CD8-positive, alpha-beta T cell (primary cell): ENCODE measurements at regions of chr17 and their contacts with region 1.

Region 1: GRCh38 chr17:49556223-49556971 is 19.3 kb upstream of the NXPH3 start:
- DNase-seq: peak; percentile 68 to 89 (median 81)
- ATAC-seq: peak; percentile 99
- H3K4me3 ChIP-seq: no peak overlapping the region
- H3K4me3 Mint-ChIP-seq: no peak overlapping the region
- H3K27ac ChIP-seq: no peak overlapping the region
- H3K27ac Mint-ChIP-seq: no peak overlapping the region
- H3K4me1 ChIP-seq: peaks cover 7% of the 10 kb centered on the region
- H3K4me1 Mint-ChIP-seq: peaks cover 5% of the 10 kb centered on the region
- H3K27me3 ChIP-seq: no peaks in the 10 kb centered on the region
- H3K27me3 Mint-ChIP-seq: peaks cover 3% of the 10 kb centered on the region
- CTCF ChIP-seq: peak; percentile 92

Region 2: GRCh38 chr17:49407981-49408501 is 148.4 kb before region 1 on chr17:
- CTCF ChIA-PET with region 1: interaction called, 131 read pairs
- POLR2A ChIA-PET with region 1: interaction called, 3 read pairs
- intact Hi-C with region 1: loop called (anchors 1 kb)
- DNase-seq: peak; percentile 76 to 90 (median 85)
- ATAC-seq: peak; percentile 97
- H3K4me3 ChIP-seq: no peak overlapping the region
- H3K4me3 Mint-ChIP-seq: no peak overlapping the region
- H3K27ac ChIP-seq: peak overlapping the region in 1 of 2 experiments; percentile 1
- H3K27ac Mint-ChIP-seq: peak overlapping the region; percentile 17
- H3K4me1 ChIP-seq: peaks cover 27% of the 10 kb centered on the region
- H3K4me1 Mint-ChIP-seq: peaks cover 36% of the 10 kb centered on the region
- H3K27me3 ChIP-seq: no peaks in the 10 kb centered on the region
- H3K27me3 Mint-ChIP-seq: no peaks in the 10 kb centered on the region
- CTCF ChIP-seq: peak; percentile 94

Region 3: DNA sequence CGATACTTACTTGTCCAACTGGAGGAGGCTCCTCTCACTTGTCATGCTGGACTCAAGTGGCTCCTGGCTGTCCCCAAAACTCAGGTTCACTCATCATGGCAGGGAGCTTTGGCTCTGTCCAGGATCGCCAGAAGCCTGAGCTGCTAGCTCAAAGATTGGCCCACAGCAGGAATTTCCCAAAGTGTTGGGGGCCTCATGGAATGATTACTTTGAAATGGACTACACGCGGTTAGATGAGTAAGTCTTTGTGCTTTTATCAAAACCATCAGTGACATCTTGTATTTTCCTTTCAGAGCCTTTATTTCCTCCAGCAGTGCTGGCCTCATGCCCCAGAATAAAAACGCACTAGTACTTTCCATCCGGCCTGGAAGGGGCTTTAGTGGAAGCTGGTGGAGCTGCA is 112.5 kb before region 1 on chr17:
- CTCF ChIA-PET with region 1: interaction called, 12 read pairs
- POLR2A ChIA-PET with region 1: no interaction called
- intact Hi-C with region 1: no loop called
- DNase-seq: no peak
- ATAC-seq: no peak
- H3K4me3 ChIP-seq: no peak overlapping the region
- H3K4me3 Mint-ChIP-seq: no peak overlapping the region
- H3K27ac ChIP-seq: no peak overlapping the region
- H3K27ac Mint-ChIP-seq: no peak overlapping the region
- H3K4me1 ChIP-seq: no peaks in the 10 kb centered on the region
- H3K4me1 Mint-ChIP-seq: peaks cover 2% of the 10 kb centered on the region
- H3K27me3 ChIP-seq: peaks cover 0 to 4% of the 10 kb centered on the region in 2 experiments
- H3K27me3 Mint-ChIP-seq: peaks cover 39% of the 10 kb centered on the region
- CTCF ChIP-seq: no peak

Region 4: DNA sequence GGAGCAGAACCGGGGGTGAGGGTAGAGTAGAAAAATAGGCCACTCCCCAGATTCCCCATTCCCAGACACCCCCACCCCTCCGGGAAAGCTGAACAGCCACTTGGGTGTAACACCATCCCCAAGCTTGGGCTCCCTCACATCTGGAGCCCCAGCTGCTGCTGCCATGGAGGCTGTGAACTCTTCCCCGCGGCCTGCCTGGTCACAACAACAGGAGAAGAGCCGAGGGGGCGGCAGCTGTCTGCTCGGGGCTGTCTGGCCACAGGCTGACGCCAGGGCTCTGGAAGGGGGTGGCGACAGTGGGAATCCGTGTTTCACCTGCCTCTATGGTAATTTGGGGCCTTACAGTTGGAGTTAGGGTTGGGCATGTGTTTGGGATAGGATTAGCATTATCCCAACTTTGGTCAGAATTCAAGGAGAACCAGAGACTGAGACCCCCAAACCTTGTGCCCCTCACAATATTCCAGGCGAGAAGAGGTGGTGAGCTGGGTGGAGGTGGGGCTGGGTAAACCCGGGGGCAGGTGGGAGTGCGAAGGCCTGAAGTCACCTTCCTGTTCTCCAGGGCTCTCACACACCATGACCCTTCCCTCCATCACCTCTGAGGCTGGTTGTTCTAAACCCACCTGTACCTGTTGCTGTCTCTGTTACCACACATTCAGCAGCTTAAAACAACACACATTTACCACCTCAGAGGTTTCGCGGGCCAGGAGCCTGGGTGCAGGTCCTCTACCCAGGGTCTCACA is 10.4 kb before region 1 on chr17:
- CTCF ChIA-PET with region 1: interaction called, 38 read pairs
- POLR2A ChIA-PET with region 1: no interaction called
- intact Hi-C with region 1: no loop called
- DNase-seq: no peak
- ATAC-seq: no peak
- H3K4me3 ChIP-seq: no peak overlapping the region
- H3K4me3 Mint-ChIP-seq: no peak overlapping the region
- H3K27ac ChIP-seq: no peak overlapping the region
- H3K27ac Mint-ChIP-seq: no peak overlapping the region
- H3K4me1 ChIP-seq: no peaks in the 10 kb centered on the region
- H3K4me1 Mint-ChIP-seq: no peaks in the 10 kb centered on the region
- H3K27me3 ChIP-seq: peaks cover 0 to 2% of the 10 kb centered on the region in 2 experiments
- H3K27me3 Mint-ChIP-seq: peaks cover 6% of the 10 kb centered on the region
- CTCF ChIP-seq: no peak

Region 5: GRCh38 chr17:49694847-49695683 is 138.7 kb after region 1 on chr17:
- CTCF ChIA-PET with region 1: interaction called, 542 read pairs
- POLR2A ChIA-PET with region 1: no interaction called
- intact Hi-C with region 1: no loop called
- DNase-seq: peak; percentile 46 to 83 (median 70)
- ATAC-seq: peak; percentile 41
- H3K4me3 ChIP-seq: no peak overlapping the region
- H3K4me3 Mint-ChIP-seq: peak overlapping the region; percentile 24
- H3K27ac ChIP-seq: peak overlapping the region in 1 of 2 experiments; percentile 78
- H3K27ac Mint-ChIP-seq: peak overlapping the region; percentile 91
- H3K4me1 ChIP-seq: peaks cover 40% of the 10 kb centered on the region
- H3K4me1 Mint-ChIP-seq: peaks cover 56% of the 10 kb centered on the region
- H3K27me3 ChIP-seq: no peaks in the 10 kb centered on the region
- H3K27me3 Mint-ChIP-seq: no peaks in the 10 kb centered on the region
- CTCF ChIP-seq: peak; percentile 87